AG04449 (cell line): ENCODE measurements at regions of chr11 and their contacts with region 1.

Region 1: GRCh38 chr11:783581-784015 is 6.3 kb downstream of the CEND1 start:
- DNase-seq: peak; percentile 69
- H3K4me3 ChIP-seq: peak overlapping the region; percentile 10; the same call in 1 of the 2 replicates
- CTCF ChIP-seq: peak; percentile 95

Region 2: DNA sequence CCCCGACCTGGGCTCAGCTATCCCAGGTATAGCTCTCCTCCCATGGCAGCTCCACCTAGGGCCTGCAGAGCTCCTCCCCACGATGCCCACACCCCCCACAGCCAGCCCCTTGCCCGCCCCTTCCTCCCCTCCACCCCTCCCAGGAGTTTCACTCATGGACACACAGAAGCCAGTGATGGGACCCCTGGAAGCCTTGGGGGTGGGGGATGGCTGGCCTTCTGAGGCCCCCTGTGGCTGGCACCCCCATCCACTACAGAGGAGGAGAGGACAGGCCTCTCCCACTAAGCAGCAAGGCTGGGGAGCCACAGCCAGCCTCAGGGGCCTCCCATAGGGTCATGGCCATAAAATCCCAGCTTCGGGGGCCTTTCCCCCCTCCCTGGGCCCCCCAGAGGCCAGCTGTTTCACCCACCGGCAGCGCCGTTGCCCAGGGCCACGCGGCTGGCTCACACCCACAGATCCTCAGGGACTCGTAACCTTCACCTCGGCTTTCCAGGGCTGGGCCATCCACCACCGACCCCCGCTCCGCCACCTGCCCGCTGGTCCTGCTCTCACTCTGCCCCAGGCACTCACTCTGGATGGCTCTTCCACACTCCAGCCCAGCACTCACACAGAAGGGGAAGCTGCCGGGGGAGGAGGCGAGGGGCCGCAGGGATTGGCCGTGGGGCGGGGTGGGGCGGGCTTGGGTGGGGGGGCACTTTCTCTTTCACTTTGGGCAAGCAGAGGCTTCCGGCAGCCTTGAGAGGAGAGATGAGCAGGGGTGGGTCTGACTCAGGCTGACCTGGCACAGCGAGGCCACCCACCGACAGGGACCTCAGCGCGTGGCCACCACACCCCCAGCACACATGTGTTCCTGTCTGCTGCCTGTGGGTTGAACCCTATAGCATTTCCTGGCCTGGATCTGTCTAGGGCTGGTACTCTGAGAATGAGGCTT is 12.3 kb after region 1 on chr11:
- CTCF ChIA-PET with region 1: interaction called, 13 read pairs
- POLR2A ChIA-PET with region 1: interaction called, 5 read pairs
- DNase-seq: no peak
- H3K4me3 ChIP-seq: peak overlapping the region; percentile 81
- CTCF ChIP-seq: no peak

Region 3: DNA sequence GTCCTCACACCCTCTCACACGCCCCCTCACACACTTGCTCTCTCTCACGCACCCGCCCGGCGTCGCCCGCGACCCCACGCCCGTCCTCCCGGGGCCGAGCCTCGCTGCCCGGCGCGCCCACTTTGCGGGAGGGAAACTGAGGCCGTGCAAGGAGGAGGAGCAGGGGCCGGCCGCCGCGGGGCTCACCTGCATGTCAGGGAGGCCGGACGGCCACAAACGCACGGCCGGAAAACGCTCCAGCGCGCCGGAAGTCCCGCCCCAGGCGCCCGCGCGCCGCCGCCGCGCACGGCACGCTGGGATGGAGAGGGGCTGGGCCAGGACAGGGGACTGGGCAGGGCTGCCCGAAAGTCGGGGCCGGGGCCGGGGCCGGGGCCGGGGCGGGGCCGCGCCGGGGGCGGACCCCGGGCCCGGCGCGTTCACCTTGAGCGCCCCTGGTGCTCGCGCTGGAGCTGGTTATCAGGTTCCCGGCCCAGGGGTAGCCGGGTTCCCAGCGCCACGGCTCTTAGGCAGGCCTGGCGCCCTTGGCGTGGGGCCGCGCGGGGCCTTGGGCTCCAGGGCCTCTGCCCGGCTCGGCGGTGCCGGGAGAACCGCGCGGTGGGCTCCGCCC is 127.1 kb after region 1 on chr11 and contains the start of gene CHID1:
- CTCF ChIA-PET with region 1: no interaction called
- POLR2A ChIA-PET with region 1: no interaction called
- DNase-seq: no peak
- H3K4me3 ChIP-seq: peak within 1 kb of the TSS; percentile 85
- CTCF ChIP-seq: no peak

Region 4: GRCh38 chr11:1073261-1073724 is 289.7 kb after region 1 on chr11:
- CTCF ChIA-PET with region 1: no interaction called
- POLR2A ChIA-PET with region 1: no interaction called
- DNase-seq: no peak
- H3K4me3 ChIP-seq: no peak overlapping the region
- CTCF ChIP-seq: no peak